ENCODE measurements at regions of chr1 and their contacts with region 1.

Region 1: DNA sequence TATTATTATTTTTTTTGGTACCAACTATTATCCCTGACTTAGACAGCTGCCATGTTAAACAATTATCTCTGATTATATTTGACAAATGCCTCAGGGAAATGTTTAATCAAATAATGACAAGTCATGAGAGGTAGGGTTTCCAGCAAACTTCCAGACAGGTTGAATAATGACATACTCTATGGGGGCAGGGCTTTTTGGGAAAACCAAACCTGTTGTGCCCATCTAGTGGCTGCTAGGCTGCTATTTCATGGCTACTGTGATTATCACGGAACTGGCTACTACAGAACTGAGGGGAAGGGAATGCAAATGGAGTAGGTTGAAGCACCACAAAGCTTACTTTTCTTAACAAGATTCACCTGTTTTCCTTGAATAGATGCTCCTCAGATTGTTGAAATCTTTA is 77.6 kb downstream of the DUSP10 start:
- DNase-seq: no peak
- ATAC-seq: no peak
- H3K4me3 ChIP-seq: no peak overlapping the region
- H3K27ac ChIP-seq: no peak overlapping the region
- H3K4me1 ChIP-seq: no peaks in the 10 kb centered on the region
- H3K27me3 ChIP-seq: peaks cover 0 to 3% (median 0%) of the 10 kb centered on the region in 9 donors
- CTCF ChIP-seq: no peak
- POLR2A ChIP-seq: no peak

Region 2: DNA sequence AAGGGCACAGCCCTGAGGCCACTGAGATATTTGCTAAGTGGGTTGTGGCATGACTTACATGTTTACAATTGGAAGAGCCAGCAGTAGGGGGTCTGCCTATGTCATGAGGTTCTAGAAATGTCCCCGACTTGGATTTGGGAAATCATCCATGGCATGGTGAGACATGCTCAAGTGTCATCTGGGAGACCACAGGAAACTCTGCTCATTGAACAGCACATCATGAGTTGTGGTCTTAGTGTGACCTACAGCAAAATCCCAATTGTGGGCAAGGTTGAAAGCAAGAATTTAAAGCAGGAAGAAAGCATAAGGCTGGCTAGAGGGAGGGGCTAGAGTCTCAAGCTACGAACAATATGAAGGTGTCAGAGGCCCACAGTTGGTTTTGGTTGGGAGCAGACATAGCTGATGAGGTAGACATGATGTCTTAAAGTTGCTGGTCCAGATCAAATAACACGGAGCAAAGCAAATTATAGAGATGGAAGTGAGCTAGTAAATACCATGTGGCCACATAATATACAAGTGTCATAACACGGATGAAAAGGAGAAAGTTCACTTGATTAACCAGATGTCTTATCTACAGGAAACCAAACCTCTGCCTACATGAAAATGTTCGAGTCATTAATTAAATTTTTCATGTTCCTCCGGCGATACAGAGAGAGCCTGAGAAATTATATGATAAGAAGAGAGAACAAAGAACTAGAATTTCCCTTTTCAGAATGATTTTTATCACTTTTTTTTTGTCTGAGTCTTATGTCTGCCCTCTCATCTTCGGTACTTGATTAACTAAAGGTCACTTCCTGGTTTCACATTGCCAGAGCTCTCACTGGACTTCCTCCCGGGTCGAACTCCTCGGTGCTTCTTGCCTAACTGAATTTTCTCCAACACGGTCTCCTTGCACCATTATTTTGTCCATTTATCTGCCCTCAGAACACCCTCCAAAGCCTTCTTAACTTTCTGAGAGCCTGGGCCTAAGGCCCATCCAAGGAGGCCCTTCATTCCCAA is 145.1 kb after region 1 on chr1:
- intact Hi-C with region 1: no loop called
- DNase-seq: no peak
- ATAC-seq: no peak
- H3K4me3 ChIP-seq: peak overlapping the region in 1 of 12 donors; percentile 21
- H3K27ac ChIP-seq: no peak overlapping the region
- H3K4me1 ChIP-seq: peaks cover 0 to 9% (median 0%) of the 10 kb centered on the region in 12 donors
- H3K27me3 ChIP-seq: no peaks in the 10 kb centered on the region
- CTCF ChIP-seq: no peak
- POLR2A ChIP-seq: no peak

Region 3: DNA sequence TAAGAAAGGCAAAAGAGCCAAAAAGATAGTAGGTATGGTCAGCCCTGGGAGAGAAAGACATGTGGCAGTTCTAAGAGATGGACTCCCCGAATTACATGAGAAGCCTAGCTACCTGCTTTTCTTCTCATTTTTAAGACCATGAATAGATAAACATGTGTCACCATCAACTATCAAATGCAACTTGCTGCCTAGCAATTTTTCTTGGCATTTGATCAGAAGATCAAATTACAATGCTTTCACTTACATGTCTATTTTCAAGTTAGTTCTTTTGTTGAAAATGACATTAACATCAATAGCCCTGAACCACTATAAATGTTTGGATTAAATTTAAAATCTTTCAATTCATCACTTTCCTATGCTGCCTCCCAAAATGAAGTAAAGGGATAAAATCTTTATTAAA is 671.3 kb after region 1 on chr1:
- intact Hi-C with region 1: loop called in 1 of 10 experiments (anchors 5 kb)
- DNase-seq: no peak
- ATAC-seq: no peak
- H3K4me3 ChIP-seq: no peak overlapping the region
- H3K27ac ChIP-seq: no peak overlapping the region
- H3K4me1 ChIP-seq: no peaks in the 10 kb centered on the region
- H3K27me3 ChIP-seq: no peaks in the 10 kb centered on the region
- CTCF ChIP-seq: no peak
- POLR2A ChIP-seq: no peak